PC-9 (cell line): ENCODE measurements at regions of chrX and their contacts with region 1.

Region 1: GRCh38 chrX:15570145-15570544 is 30.6 kb downstream of the ACE2 start:
- DNase-seq: no peak
- H3K4me3 ChIP-seq: no peak overlapping the region
- H3K27ac ChIP-seq: no peak overlapping the region
- H3K4me1 ChIP-seq: no peaks in the 10 kb centered on the region; the same call in 1 of the 2 replicates
- H3K27me3 ChIP-seq: no peaks in the 10 kb centered on the region
- CTCF ChIP-seq: no peak

Region 2: DNA sequence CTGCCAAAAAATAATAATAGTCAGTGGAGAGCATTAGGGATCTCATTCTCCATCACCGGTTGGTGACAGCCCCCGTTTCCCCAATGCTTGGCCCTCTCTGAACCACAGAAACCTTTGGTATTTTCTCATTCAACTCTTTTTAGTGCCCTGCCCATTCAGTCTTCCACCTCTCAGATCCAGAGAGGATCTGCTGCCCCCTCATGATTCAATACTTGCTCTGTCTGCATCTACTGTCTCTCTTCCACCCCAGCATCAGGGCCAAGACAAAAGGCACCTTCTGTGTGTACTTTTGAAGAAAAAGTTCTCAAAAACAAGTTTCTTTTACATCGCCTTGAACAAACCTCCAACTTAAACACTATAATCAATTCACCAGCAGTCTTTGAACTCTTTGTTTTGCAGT is 75.1 kb after region 1 on chrX:
- CTCF ChIA-PET with region 1: no interaction called
- POLR2A ChIA-PET with region 1: no interaction called
- intact Hi-C with region 1: loop called (anchors 1 kb)
- DNase-seq: no peak
- H3K4me3 ChIP-seq: no peak overlapping the region
- H3K27ac ChIP-seq: no peak overlapping the region
- H3K4me1 ChIP-seq: no peaks in the 10 kb centered on the region
- H3K27me3 ChIP-seq: no peaks in the 10 kb centered on the region
- CTCF ChIP-seq: no peak